ENCODE measurements at regions of chrX and their contacts with region 1.

Region 1: GRCh38 chrX:110210417-110211139 is 107.3 kb downstream of the AMMECR1 start:
- DNase-seq: peak; percentile 4 to 89
- H3K4me3 ChIP-seq: no peak overlapping the region; the same call in 1 of the 2 replicates
- H3K27ac ChIP-seq: peak overlapping the region; percentile 77
- H3K4me1 ChIP-seq: peaks cover 42% of the 10 kb centered on the region
- H3K27me3 ChIP-seq: no peaks in the 10 kb centered on the region
- CTCF ChIP-seq: no peak

Region 2: GRCh38 chrX:110180176-110180927 is 30.2 kb before region 1 on chrX:
- CTCF ChIA-PET with region 1: interaction called, 8 read pairs
- POLR2A ChIA-PET with region 1: interaction called, 6 read pairs
- intact Hi-C with region 1: loop called (anchors 2 kb)
- DNase-seq: peak; percentile 38 to 49
- H3K4me3 ChIP-seq: no peak overlapping the region
- H3K27ac ChIP-seq: peak overlapping the region; percentile 48
- H3K4me1 ChIP-seq: peaks cover 36% of the 10 kb centered on the region
- H3K27me3 ChIP-seq: no peaks in the 10 kb centered on the region
- CTCF ChIP-seq: no peak

Region 3: GRCh38 chrX:110394671-110395070 is 184.1 kb after region 1 on chrX:
- CTCF ChIA-PET with region 1: no interaction called
- POLR2A ChIA-PET with region 1: no interaction called
- intact Hi-C with region 1: loop called (anchors 2 kb)
- DNase-seq: peak; percentile 66 to 94
- H3K4me3 ChIP-seq: no peak overlapping the region
- H3K27ac ChIP-seq: peak overlapping the region; percentile 77
- H3K4me1 ChIP-seq: peaks cover 51% of the 10 kb centered on the region
- H3K27me3 ChIP-seq: no peaks in the 10 kb centered on the region
- CTCF ChIP-seq: no peak

Region 4: DNA sequence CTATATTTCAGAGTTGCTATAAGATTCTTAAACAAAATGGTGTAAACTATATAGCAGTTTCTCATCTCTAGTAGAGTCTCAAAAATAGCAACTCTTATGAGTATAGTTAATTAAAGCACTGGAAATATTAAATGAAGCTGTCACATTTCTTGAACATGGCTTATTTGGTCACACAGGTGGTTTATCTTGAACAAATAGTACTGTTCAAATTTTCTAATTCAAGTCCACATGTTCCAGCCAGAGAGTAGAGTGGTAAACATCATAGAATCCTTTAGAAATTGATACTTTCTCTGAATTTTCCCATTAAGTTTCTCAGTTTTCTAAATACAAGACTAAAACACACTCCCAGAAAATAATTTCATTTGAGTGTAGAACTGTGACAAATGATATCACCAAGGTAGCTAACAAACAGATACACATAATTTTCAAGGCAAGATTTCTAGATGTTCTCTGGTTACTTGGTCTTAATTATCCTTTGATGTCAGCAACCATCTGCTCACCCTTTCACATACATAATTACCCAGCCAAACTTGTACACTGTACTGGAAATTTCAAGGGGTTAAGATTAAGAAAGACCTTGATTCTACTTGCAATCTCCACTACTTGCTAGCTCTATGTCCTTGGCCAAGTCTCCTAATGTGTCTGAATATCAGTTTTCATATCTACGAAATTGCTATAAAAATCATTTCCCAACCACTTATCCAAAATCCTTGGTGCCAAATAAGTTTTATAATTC is 861.1 kb after region 1 on chrX:
- CTCF ChIA-PET with region 1: no interaction called
- POLR2A ChIA-PET with region 1: no interaction called
- intact Hi-C with region 1: no loop called
- DNase-seq: no peak
- H3K4me3 ChIP-seq: no peak overlapping the region
- H3K27ac ChIP-seq: no peak overlapping the region
- H3K4me1 ChIP-seq: no peaks in the 10 kb centered on the region
- H3K27me3 ChIP-seq: no peaks in the 10 kb centered on the region
- CTCF ChIP-seq: no peak